ENCODE measurements at regions of chr11 and their contacts with region 1.

Region 1: DNA sequence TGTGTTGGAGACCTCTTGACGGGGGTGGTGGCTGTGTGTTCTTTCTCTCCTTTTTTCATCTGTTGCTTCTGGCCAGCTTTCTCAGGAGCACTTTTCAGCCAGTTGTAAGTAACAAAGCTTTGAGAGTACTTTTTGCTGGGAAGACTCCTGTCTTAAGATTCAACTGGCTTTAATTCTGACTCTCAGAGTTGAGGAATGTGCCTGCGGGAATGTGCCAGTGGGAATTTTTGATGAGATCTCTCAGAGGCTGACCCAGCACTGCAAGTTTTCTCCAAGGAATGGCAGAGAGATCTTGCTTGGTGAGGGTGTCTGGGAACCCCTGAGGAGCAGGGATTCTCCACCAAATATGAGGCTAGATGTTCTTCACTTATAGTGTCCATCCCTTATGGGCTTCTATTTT is 91.6 kb upstream of the OR9Q1 start:
- DNase-seq: no peak
- H3K4me3 ChIP-seq: no peak overlapping the region
- H3K27ac ChIP-seq: no peak overlapping the region
- H3K4me1 ChIP-seq: no peaks in the 10 kb centered on the region
- H3K27me3 ChIP-seq: no peaks in the 10 kb centered on the region
- CTCF ChIP-seq: no peak

Region 2: DNA sequence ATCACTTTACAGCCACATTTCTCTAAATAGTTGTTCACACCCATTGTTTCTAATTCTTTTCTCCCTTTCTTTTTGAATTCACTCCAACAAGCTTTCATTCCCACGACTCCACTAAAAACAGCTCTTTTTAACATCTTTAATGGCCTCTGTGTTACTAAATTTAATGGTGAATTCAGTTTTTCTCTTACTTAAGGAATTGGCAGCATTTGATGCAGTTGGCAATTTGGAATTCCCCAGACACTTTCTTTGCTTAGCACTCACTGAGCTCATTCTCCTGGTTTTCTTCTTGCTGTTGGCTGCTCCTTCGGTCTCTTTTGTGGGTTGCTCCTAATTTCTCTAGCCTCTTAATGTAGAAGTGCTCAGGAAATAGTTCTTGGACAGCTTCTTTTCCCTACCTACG is 51.1 kb after region 1 on chr11:
- CTCF ChIA-PET with region 1: no interaction called
- dilution Hi-C with region 1: loop called (anchors 5 kb)
- in situ Hi-C with region 1: no loop called
- intact Hi-C with region 1: no loop called
- DNase-seq: no peak
- H3K4me3 ChIP-seq: no peak overlapping the region
- H3K27ac ChIP-seq: no peak overlapping the region
- H3K4me1 ChIP-seq: no peaks in the 10 kb centered on the region
- H3K27me3 ChIP-seq: peaks cover 1% of the 10 kb centered on the region
- CTCF ChIP-seq: no peak

Region 3: DNA sequence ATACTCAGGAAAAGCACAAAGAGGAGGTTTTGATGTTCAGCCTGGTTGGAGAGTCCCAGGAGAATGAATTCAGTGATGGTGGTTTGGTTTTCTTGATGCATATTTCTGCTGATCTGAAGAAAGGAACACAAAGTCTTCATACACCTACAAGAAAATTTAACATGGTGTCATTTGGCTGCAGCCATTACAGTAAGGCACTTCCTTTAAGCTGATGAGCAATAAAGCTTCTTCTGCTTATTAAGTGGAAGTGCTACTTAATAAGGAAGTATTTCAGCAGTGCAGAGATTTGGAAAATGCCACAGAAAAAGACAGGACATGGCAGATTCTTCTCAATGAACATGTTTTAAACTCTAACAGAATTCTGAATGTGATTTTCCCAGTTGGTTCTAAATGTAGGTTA is 271.9 kb after region 1 on chr11 and contains the start of gene OR1S2:
- CTCF ChIA-PET with region 1: no interaction called
- dilution Hi-C with region 1: loop called (anchors 5 kb)
- in situ Hi-C with region 1: no loop called
- intact Hi-C with region 1: no loop called
- DNase-seq: no peak
- H3K4me3 ChIP-seq: no peak within 1 kb of the TSS
- H3K27ac ChIP-seq: no peak within 1 kb of the TSS
- H3K4me1 ChIP-seq: no peaks in the 10 kb centered on the region
- H3K27me3 ChIP-seq: peaks cover 3% of the 10 kb centered on the region
- CTCF ChIP-seq: no peak
- total RNA-seq, gene OR1S2: not detected

Measured in mammary epithelial cell (primary cell).